Right lobe of liver (tissue), 6 donors: ENCODE measurements at regions of chr1 and their contacts with region 1.

Region 1: GRCh38 chr1:185317034-185317885 is at the start of gene IVNS1ABP:
- DNase-seq: peak; percentile 96 to 97 (median 97)
- ATAC-seq: peak; percentile 80 to 90 (median 84)
- H3K4me3 ChIP-seq: peak within 1 kb of the TSS; percentile 82 to 92 (median 91)
- H3K27ac ChIP-seq: peak within 1 kb of the TSS; percentile 95 to 98 (median 97)
- H3K4me1 ChIP-seq: peaks cover 0 to 37% (median 7%) of the 10 kb centered on the region in 4 donors
- H3K27me3 ChIP-seq: no peaks in the 10 kb centered on the region
- CTCF ChIP-seq: peak in 3 of 4 donors; percentile 18 to 28 (median 27)
- POLR2A ChIP-seq: peak; percentile 98
- total RNA-seq, gene IVNS1ABP: 17.0 to 38.3 (median 26.8) TPM

Region 2: DNA sequence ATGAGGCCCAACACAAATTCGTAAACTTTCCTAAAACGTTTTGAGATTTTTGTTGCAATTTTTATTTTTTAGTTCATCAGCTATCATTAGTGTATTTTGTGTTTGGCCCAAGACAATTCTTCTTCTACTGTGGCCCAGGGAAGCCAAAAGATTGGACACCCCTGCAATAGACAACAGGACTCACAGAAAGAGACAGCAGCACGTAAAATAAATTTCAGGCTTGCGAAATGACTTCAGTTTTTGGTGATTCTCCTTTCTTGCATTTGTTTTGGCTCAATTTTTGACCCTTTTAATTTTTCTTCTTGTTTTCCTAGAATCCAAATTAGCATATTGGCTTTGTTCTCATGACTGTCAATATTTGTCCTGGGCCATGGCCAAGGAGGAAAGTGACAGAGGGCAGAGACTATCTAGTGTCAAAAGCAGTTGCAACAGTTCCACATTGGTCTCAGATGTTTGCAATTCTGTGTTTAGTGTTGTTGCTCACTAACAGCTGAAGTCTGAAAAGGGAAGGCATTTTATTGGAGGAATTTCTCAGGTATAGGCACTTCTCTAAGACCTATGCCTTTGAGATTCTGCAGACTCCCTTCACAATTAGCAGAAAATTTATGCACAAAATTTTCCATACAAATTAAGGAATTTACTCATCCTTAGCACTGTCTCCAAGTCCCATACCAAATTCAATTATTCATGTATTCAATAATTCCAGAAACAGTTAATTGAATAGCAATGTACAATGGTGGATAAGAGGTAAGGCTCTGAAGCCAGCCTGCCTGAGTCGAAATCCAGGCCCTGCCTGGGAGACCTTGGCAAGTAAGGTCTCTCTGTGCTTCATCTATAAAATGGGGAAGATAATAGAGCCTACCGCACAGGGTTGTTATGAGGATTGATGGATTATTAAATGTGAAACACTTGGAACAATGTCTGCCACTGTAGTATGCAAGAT is 160.6 kb after region 1 on chr1:
- intact Hi-C with region 1: loop called in 1 of 2 experiments (anchors 10 kb)
- DNase-seq: peak; percentile 59 to 88 (median 65)
- ATAC-seq: peak; percentile 93 to 99 (median 96)
- H3K4me3 ChIP-seq: no peak overlapping the region
- H3K27ac ChIP-seq: peak overlapping the region in 1 of 3 donors; percentile 5
- H3K4me1 ChIP-seq: peaks cover 0 to 34% (median 13%) of the 10 kb centered on the region in 4 donors
- H3K27me3 ChIP-seq: peaks cover 0 to 2% of the 10 kb centered on the region in 2 donors
- CTCF ChIP-seq: no peak
- POLR2A ChIP-seq: no peak

Region 3: DNA sequence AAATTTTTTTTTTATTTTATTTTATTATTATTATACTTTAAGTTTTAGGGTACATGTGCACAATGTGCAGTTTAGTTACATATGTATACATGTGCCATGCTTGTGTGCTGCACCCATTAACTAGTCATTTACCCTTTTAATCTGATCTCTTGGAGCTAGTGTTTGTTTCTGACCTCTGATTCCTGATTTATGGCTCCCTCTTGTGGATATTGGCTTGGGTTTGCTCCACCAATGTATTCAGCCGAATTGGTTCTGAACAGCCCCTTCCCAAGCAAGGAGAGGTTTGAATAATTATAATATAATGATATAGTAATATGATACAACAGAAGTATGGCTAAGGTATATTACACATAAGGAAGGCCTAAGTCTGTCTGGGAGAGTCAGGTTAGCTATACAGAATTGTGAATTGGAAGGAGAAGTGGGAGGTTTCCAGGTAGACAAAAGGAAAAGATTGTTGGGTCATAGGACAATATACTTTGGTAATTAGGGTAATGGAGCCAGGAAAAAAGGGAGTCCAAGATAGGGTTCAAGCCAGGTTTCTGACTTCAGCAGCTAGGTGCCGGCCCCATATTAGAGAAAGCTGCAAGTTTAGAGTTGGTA is 363.9 kb after region 1 on chr1:
- intact Hi-C with region 1: loop called in 1 of 2 experiments (anchors 10 kb)
- DNase-seq: no peak
- ATAC-seq: peak; percentile 84 to 91 (median 84)
- H3K4me3 ChIP-seq: no peak overlapping the region
- H3K27ac ChIP-seq: no peak overlapping the region
- H3K4me1 ChIP-seq: no peaks in the 10 kb centered on the region
- H3K27me3 ChIP-seq: no peaks in the 10 kb centered on the region
- CTCF ChIP-seq: peak; percentile 64 to 70 (median 67)
- POLR2A ChIP-seq: no peak